Activated B cell treated with CpG ODN at 0.5 μM for 24 hours (primary cell): ENCODE measurements at regions of chr1 and their contacts with region 1.

Region 1: DNA sequence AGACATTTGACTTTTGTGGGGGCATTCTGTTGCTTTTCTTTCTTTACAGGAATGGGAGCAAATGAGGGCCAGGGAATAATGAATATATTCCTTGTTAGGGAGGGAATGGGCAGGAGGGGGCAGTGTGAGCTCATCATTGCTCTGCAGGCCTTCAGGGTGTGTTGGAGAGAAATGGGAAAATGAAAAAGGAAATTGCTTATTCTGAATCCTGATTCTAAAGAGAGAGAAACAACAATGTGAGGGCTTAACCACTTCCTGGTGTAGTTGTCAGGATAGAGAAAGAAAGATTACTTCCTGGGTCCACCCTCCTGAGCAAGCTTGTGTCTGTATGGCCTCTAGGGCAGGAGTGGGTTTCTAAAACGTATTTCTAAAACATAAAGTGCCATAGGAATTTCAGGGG is 28.3 kb downstream of the VANGL2 start:
- DNase-seq: no peak
- ATAC-seq: no peak
- H3K4me3 Mint-ChIP-seq: peak overlapping the region; percentile 44
- H3K27ac Mint-ChIP-seq: peak overlapping the region; percentile 95
- H3K4me1 Mint-ChIP-seq: peaks cover 61% of the 10 kb centered on the region
- H3K27me3 Mint-ChIP-seq: no peaks in the 10 kb centered on the region
- CTCF ChIP-seq: no peak

Region 2: GRCh38 chr1:160451119-160451858 is 22.6 kb after region 1 on chr1:
- CTCF ChIA-PET with region 1: interaction called, 5 read pairs
- POLR2A ChIA-PET with region 1: interaction called, 18 read pairs
- intact Hi-C with region 1: loop called (anchors 2 kb)
- DNase-seq: no peak
- ATAC-seq: no peak
- H3K4me3 Mint-ChIP-seq: peak overlapping the region; percentile 26
- H3K27ac Mint-ChIP-seq: peak overlapping the region; percentile 74
- H3K4me1 Mint-ChIP-seq: peaks cover 76% of the 10 kb centered on the region
- H3K27me3 Mint-ChIP-seq: no peaks in the 10 kb centered on the region
- CTCF ChIP-seq: no peak

Region 3: GRCh38 chr1:160474392-160475242 is 46.0 kb after region 1 on chr1:
- CTCF ChIA-PET with region 1: interaction called, 4 read pairs
- POLR2A ChIA-PET with region 1: interaction called, 10 read pairs
- intact Hi-C with region 1: loop called (anchors 1 kb)
- DNase-seq: no peak
- ATAC-seq: peak; percentile 95
- H3K4me3 Mint-ChIP-seq: no peak overlapping the region
- H3K27ac Mint-ChIP-seq: no peak overlapping the region
- H3K4me1 Mint-ChIP-seq: peaks cover 16% of the 10 kb centered on the region
- H3K27me3 Mint-ChIP-seq: no peaks in the 10 kb centered on the region
- CTCF ChIP-seq: no peak

Region 4: GRCh38 chr1:160489513-160490261 is 61.0 kb after region 1 on chr1:
- CTCF ChIA-PET with region 1: interaction called, 17 read pairs
- POLR2A ChIA-PET with region 1: interaction called, 54 read pairs
- intact Hi-C with region 1: loop called (anchors 1 kb)
- DNase-seq: no peak
- ATAC-seq: peak; percentile 8
- H3K4me3 Mint-ChIP-seq: peak overlapping the region; percentile 49
- H3K27ac Mint-ChIP-seq: no peak overlapping the region
- H3K4me1 Mint-ChIP-seq: peaks cover 3% of the 10 kb centered on the region
- H3K27me3 Mint-ChIP-seq: no peaks in the 10 kb centered on the region
- CTCF ChIP-seq: no peak

Region 5: DNA sequence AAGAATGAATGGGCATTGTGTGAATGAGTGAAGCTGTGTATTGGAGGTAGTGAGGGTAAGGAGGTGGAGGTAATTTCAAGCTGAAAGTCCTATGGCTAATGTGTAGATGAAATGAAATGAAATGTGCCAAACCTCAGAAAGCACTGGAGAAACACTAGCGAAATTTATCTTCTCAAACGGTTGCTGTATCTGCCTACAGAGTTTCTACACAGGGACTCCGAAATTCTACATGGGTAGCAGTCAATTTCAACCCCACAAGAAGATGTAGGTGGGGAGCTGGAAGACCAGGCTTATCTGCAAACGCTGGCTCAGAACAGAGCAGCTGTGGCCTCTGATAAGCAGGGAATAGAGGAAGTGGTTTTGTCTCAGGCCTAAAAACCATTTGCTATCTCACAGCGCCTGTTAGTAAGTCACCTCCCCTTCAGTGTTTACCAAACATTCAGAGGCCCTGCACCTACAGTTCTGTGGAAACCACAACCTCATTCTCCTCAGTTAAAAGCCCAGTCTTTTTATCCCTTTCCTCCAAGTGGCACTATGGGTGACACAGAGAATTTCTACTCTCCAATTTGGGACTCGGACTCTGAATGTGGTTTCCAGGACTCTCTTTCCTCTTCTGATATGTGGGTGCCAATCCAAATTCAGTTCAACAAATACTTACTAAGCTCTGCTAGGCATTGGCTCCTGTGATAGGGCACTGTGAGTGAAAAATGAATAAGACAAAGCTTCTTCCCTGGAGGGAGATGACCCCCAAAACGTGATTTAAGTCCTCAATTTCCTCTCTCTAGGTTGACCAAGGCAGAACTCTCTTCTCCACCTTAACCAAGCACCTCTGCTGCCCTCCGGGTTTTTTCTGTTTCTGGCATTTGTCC is 111.6 kb after region 1 on chr1:
- CTCF ChIA-PET with region 1: interaction called, 27 read pairs
- POLR2A ChIA-PET with region 1: interaction called, 8 read pairs
- intact Hi-C with region 1: loop called (anchors 1 kb)
- DNase-seq: no peak
- ATAC-seq: peak; percentile 95
- H3K4me3 Mint-ChIP-seq: peak overlapping the region; percentile 56
- H3K27ac Mint-ChIP-seq: peak overlapping the region; percentile 96
- H3K4me1 Mint-ChIP-seq: peaks cover 58% of the 10 kb centered on the region
- H3K27me3 Mint-ChIP-seq: no peaks in the 10 kb centered on the region
- CTCF ChIP-seq: no peak

Region 6: DNA sequence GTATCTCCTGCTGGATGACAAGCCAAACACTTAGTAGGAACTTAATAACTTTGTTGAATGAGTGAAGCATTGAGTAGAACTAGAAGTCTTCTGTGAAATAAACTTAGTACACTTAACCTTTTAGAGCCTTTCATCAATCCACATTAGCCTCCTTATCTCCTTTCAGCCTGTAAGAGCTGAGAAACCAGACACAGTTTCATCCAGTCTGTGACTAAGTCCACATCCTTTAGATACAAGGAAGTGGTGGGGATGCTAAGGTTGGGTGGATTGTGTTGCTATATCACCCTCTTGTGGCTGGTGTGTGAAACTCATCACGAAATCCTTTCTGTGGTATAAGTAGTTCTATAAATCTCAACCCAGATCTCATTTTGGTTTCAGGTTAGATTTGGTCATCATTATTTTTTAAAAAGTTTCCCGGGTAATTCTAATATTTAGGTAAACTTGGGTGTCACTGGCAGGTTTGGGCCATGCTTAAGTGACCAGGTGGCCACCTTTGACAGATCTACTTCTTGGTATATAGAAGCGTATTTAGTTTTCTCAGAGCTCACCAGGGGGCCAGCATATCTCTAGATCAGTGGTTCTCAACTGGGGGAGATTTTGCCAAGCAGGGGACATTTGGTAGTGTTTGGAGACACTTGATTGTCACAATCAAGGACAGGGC is 178.5 kb after region 1 on chr1:
- CTCF ChIA-PET with region 1: interaction called, 175 read pairs
- POLR2A ChIA-PET with region 1: interaction called, 23 read pairs
- intact Hi-C with region 1: loop called (anchors 1 kb)
- DNase-seq: no peak
- ATAC-seq: peak; percentile 94
- H3K4me3 Mint-ChIP-seq: peak overlapping the region; percentile 42
- H3K27ac Mint-ChIP-seq: peak overlapping the region; percentile 84
- H3K4me1 Mint-ChIP-seq: peaks cover 33% of the 10 kb centered on the region
- H3K27me3 Mint-ChIP-seq: no peaks in the 10 kb centered on the region
- CTCF ChIP-seq: no peak